OCI-LY7 (cell line): ENCODE measurements at regions of chr7 and their contacts with region 1.

Region 1: DNA sequence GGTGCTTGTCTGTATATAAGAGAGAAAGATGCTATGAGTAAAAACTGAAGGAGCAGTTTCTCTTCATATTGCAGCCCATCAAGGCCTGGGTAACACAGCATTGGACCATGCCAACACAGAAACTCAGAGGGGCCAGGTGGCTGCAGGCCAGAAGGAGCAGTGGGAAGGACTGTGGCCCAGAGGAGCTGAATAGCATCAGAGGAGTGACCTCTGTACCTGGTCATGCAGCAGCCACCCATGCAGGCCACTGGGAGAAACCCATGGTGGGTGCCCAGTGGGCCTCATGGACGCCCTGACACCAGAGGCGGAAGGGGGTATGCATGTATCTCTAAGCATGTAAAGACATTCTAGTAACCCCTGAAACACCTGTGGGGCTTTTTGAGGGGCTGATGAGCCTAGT is 75.9 kb upstream of the YAE1 start:
- DNase-seq: no peak
- H3K4me3 ChIP-seq: no peak overlapping the region
- H3K27ac ChIP-seq: no peak overlapping the region
- H3K4me1 ChIP-seq: no peaks in the 10 kb centered on the region
- CTCF ChIP-seq: no peak

Region 2: GRCh38 chr7:39504963-39505362 is 14.7 kb after region 1 on chr7:
- CTCF ChIA-PET with region 1: no interaction called
- POLR2A ChIA-PET with region 1: no interaction called
- intact Hi-C with region 1: no loop called
- DNase-seq: no peak
- H3K4me3 ChIP-seq: no peak overlapping the region
- H3K27ac ChIP-seq: no peak overlapping the region
- H3K4me1 ChIP-seq: no peaks in the 10 kb centered on the region
- CTCF ChIP-seq: no peak

Region 3: GRCh38 chr7:39880556-39880955 is 390.3 kb after region 1 on chr7:
- CTCF ChIA-PET with region 1: no interaction called
- POLR2A ChIA-PET with region 1: interaction called, 12 read pairs
- intact Hi-C with region 1: no loop called
- DNase-seq: no peak
- H3K4me3 ChIP-seq: no peak overlapping the region
- H3K27ac ChIP-seq: no peak overlapping the region
- H3K4me1 ChIP-seq: no peaks in the 10 kb centered on the region
- CTCF ChIP-seq: no peak